Mammary epithelial cell (primary cell): ENCODE measurements at regions of chr10 and their contacts with region 1.

Region 1: GRCh38 chr10:84264611-84265141 is 19.8 kb downstream of the RGR start:
- DNase-seq: peak; percentile 36
- H3K4me3 ChIP-seq: no peak overlapping the region
- H3K27ac ChIP-seq: no peak overlapping the region
- H3K4me1 ChIP-seq: peaks cover 3% of the 10 kb centered on the region
- H3K27me3 ChIP-seq: no peaks in the 10 kb centered on the region
- CTCF ChIP-seq: peak; percentile 98 to 99

Region 2: DNA sequence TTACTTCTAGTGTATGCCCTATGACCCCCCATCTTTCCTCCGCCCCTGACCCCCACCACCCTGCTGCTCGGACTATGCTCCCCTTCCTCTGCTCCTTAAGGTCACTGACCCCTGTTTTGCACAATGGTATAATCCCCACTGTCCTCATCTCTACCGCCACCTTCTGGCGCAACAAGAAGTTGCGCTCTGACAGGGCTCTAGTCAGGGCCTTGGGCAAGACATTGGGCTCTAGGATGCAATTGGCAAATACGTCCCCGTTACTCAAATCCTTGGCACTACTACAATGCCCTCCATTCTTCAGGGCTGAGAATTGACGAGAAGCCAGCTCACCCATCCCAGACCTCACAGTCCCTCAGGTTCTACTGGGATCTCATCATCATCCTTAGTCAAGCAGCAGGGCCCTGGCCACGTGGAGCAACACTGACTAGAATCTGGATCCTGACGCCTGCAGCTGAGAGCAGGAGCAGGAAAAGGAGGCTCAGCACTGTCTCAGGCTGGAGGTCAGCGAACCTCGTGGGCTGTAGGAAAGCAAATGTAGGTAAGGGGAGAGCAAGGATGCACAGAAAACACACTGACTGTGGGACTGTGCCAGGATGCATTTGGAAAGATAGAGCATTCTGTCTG is 50.0 kb before region 1 on chr10:
- CTCF ChIA-PET with region 1: no interaction called
- dilution Hi-C with region 1: no loop called
- in situ Hi-C with region 1: no loop called
- intact Hi-C with region 1: no loop called
- DNase-seq: peak; percentile 26
- H3K4me3 ChIP-seq: no peak overlapping the region
- H3K27ac ChIP-seq: no peak overlapping the region
- H3K4me1 ChIP-seq: no peaks in the 10 kb centered on the region
- H3K27me3 ChIP-seq: no peaks in the 10 kb centered on the region
- CTCF ChIP-seq: peak; percentile 73 to 82

Region 3: GRCh38 chr10:84237199-84238051 is 27.3 kb before region 1 on chr10:
- CTCF ChIA-PET with region 1: no interaction called
- dilution Hi-C with region 1: no loop called
- in situ Hi-C with region 1: no loop called
- intact Hi-C with region 1: no loop called
- DNase-seq: no peak
- H3K4me3 ChIP-seq: no peak overlapping the region
- H3K27ac ChIP-seq: no peak overlapping the region
- H3K4me1 ChIP-seq: no peaks in the 10 kb centered on the region
- H3K27me3 ChIP-seq: peaks cover 2% of the 10 kb centered on the region
- CTCF ChIP-seq: no peak

Region 4: DNA sequence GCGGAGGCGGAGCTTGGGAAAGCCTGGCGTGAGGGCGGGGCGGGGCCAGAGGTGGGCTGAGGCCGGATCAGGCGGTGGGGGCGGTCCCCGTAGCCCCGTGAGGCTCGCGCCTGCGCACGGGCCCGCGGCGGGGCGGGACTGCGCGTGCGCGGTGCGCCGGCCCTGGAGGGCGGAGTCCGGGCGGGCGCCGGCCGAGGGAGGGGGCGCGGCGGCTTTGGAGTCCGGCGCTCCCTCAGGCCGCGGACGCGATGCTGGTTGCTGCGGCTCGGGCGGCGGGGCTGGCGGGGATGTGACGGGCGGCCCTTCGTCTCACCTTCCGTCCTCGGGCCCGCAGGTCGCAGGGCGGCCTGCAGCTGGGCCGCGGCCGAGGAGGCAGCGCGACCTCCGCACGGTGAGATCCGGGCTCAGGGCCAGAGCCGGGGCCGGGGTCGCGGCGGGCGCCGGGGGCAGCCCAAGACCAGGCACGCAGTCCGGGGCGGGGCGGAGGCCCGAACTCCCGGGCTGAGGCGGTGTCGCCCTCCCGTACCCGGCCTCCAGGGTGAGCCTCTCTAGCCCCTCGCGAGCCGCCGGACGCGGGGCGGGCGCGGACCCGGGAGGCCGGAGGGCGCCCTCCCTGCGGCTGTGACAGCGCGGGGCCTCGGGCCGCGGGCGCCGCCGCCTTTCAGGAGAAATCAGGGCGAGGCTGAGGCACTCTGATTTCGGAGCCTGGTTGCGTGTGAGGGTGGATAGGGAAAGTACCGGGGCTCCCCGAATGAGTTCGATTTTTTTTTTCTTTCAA is 63.9 kb after region 1 on chr10 and contains the start of gene CCSER2:
- CTCF ChIA-PET with region 1: interaction called, 12 read pairs
- dilution Hi-C with region 1: no loop called
- in situ Hi-C with region 1: no loop called
- intact Hi-C with region 1: loop called (anchors 1 kb)
- DNase-seq: peak; percentile 87
- H3K4me3 ChIP-seq: peak within 1 kb of the TSS; percentile 69 to 87 (median 74)
- H3K27ac ChIP-seq: peak within 1 kb of the TSS; percentile 85
- H3K4me1 ChIP-seq: peaks cover 16% of the 10 kb centered on the region
- H3K27me3 ChIP-seq: no peaks in the 10 kb centered on the region
- CTCF ChIP-seq: no peak
- total RNA-seq, gene CCSER2: 45.3 to 73.3 TPM

Region 5: GRCh38 chr10:84352251-84352842 is 87.7 kb after region 1 on chr10:
- CTCF ChIA-PET with region 1: interaction called, 7 read pairs
- dilution Hi-C with region 1: no loop called
- in situ Hi-C with region 1: no loop called
- intact Hi-C with region 1: loop called (anchors 1 kb)
- DNase-seq: peak; percentile 62
- H3K4me3 ChIP-seq: no peak overlapping the region
- H3K27ac ChIP-seq: no peak overlapping the region
- H3K4me1 ChIP-seq: peaks cover 5% of the 10 kb centered on the region
- H3K27me3 ChIP-seq: no peaks in the 10 kb centered on the region
- CTCF ChIP-seq: peak; percentile 89 to 93

Region 6: DNA sequence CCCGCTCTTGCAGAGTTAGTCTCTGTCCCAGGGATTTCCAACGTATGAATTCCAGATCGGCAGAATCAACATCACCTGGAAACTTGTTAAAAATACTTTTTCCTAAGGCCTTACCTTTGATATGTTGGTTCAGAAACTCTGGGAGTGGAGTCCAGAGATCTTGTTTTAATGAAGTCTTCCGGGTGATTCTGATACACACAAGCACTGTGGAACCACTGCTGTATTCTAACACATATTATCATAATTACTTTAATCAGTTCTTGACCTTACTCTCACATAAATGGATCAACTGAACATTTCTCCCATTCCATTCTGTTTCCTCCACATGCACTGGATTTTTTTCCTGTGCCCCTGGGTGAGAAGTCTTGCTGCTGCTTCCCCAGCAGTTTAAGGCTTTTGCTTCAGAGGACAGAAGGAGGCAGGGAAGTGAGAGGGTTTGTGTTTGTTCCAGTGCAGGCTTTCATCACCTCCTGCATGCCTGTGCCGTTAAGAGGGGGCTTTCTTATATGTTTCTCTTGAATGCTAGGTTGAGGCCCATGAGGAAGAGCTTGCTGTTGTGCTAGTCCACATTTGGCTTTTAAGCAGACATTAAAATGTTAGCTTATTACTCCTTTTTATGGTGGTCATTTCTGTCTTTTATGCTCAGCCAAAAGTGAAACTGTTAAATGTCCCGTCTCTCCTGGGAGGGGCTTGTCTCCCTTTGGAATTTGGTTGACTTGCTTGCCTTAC is 96.1 kb after region 1 on chr10:
- CTCF ChIA-PET with region 1: no interaction called
- dilution Hi-C with region 1: no loop called
- in situ Hi-C with region 1: loop called in 1 of 2 experiments (anchors 10 kb)
- intact Hi-C with region 1: no loop called
- DNase-seq: peak; percentile 15
- H3K4me3 ChIP-seq: peak overlapping the region; percentile 27 to 51 (median 50)
- H3K27ac ChIP-seq: peak overlapping the region; percentile 50
- H3K4me1 ChIP-seq: peaks cover 8% of the 10 kb centered on the region
- H3K27me3 ChIP-seq: no peaks in the 10 kb centered on the region
- CTCF ChIP-seq: no peak

Region 7: DNA sequence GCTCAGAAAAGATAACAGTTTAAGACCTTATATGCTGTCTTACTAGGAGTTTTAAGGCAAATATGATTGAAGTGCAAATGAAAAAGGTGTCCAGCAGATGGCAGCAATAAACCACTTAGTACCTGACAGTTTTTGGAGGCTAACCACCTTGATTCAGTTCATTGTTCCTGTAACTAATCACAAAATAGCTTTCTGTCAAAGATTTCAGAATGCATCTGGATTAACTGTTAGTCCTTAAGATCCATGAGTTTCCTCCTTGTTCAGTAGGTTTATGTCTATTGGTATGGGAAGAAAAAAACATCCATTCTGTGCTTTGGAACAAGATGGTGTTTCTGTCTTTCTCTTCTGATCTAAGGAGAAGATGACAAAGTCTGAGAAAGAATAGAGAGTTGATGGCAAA is 110.3 kb after region 1 on chr10:
- CTCF ChIA-PET with region 1: no interaction called
- dilution Hi-C with region 1: no loop called
- in situ Hi-C with region 1: no loop called
- intact Hi-C with region 1: loop called (anchors 1 kb)
- DNase-seq: peak; percentile 51
- H3K4me3 ChIP-seq: no peak overlapping the region
- H3K27ac ChIP-seq: no peak overlapping the region
- H3K4me1 ChIP-seq: no peaks in the 10 kb centered on the region
- H3K27me3 ChIP-seq: no peaks in the 10 kb centered on the region
- CTCF ChIP-seq: peak; percentile 71 to 75

Region 8: DNA sequence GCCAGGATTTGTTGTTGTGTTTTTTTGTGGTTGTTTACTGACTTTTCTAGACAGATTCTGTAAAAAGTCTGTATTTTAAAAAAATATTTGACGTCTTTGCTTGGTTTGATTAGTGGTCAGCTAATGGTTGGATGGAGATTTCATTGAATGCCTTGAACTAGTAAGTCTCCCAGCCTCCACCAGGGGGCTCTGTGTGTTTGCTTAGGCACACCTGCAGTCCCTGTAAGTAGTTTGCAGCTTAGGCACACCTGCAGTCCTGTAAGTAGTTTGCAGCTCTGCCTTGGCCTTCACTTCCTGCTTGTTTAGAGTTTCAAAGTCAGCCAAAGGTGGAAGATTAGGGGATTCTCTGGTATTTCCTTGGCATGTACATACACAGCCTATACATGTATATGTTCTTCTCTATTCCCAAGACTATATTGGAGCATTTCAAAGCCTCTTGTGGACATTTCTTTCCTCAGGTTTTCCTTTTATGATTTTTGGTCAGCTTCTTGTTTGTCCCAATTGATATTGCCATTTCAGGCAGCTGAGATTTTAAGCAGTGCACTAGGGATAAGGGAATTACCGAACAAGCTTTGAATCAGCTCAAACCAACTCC is 165.3 kb after region 1 on chr10:
- CTCF ChIA-PET with region 1: no interaction called
- dilution Hi-C with region 1: no loop called
- in situ Hi-C with region 1: no loop called
- intact Hi-C with region 1: loop called (anchors 1 kb)
- DNase-seq: peak; percentile 61
- H3K4me3 ChIP-seq: no peak overlapping the region
- H3K27ac ChIP-seq: no peak overlapping the region
- H3K4me1 ChIP-seq: peaks cover 16% of the 10 kb centered on the region
- H3K27me3 ChIP-seq: no peaks in the 10 kb centered on the region
- CTCF ChIP-seq: peak; percentile 85 to 93

Region 9: GRCh38 chr10:84715911-84716310 is 451.2 kb after region 1 on chr10:
- CTCF ChIA-PET with region 1: no interaction called
- dilution Hi-C with region 1: no loop called
- in situ Hi-C with region 1: no loop called
- intact Hi-C with region 1: loop called (anchors 10 kb)
- DNase-seq: peak; percentile 26
- H3K4me3 ChIP-seq: no peak overlapping the region
- H3K27ac ChIP-seq: no peak overlapping the region
- H3K4me1 ChIP-seq: no peaks in the 10 kb centered on the region
- H3K27me3 ChIP-seq: no peaks in the 10 kb centered on the region
- CTCF ChIP-seq: peak; percentile 89 to 96